Transverse colon (tissue), 4 donors: ENCODE measurements at regions of chr12 and their contacts with region 1.

Region 1: GRCh38 chr12:65574878-65575277 is 249.4 kb upstream of the HMGA2 start:
- DNase-seq: no peak
- H3K4me3 ChIP-seq: no peak overlapping the region
- H3K27ac ChIP-seq: no peak overlapping the region
- H3K4me1 ChIP-seq: no peaks in the 10 kb centered on the region
- H3K27me3 ChIP-seq: peaks cover 12% of the 10 kb centered on the region
- CTCF ChIP-seq: no peak
- EP300 ChIP-seq: no peak
- POLR2A ChIP-seq: no peak

Region 2: GRCh38 chr12:64991121-64991611 is 583.7 kb before region 1 on chr12:
- in situ Hi-C with region 1: no loop called
- intact Hi-C with region 1: loop called (anchors 5 kb)
- DNase-seq: no peak
- H3K4me3 ChIP-seq: no peak overlapping the region
- H3K27ac ChIP-seq: no peak overlapping the region
- H3K4me1 ChIP-seq: no peaks in the 10 kb centered on the region
- H3K27me3 ChIP-seq: no peaks in the 10 kb centered on the region
- CTCF ChIP-seq: no peak
- EP300 ChIP-seq: no peak
- POLR2A ChIP-seq: no peak

Region 3: GRCh38 chr12:65464930-65465329 is 109.9 kb before region 1 on chr12:
- in situ Hi-C with region 1: no loop called
- intact Hi-C with region 1: no loop called
- DNase-seq: peak; percentile 8
- H3K4me3 ChIP-seq: no peak overlapping the region
- H3K27ac ChIP-seq: no peak overlapping the region
- H3K4me1 ChIP-seq: no peaks in the 10 kb centered on the region
- H3K27me3 ChIP-seq: no peaks in the 10 kb centered on the region
- CTCF ChIP-seq: no peak
- EP300 ChIP-seq: no peak
- POLR2A ChIP-seq: no peak